IMR-90 (cell line): ENCODE measurements at regions of chr14 and their contacts with region 1.

Region 1: DNA sequence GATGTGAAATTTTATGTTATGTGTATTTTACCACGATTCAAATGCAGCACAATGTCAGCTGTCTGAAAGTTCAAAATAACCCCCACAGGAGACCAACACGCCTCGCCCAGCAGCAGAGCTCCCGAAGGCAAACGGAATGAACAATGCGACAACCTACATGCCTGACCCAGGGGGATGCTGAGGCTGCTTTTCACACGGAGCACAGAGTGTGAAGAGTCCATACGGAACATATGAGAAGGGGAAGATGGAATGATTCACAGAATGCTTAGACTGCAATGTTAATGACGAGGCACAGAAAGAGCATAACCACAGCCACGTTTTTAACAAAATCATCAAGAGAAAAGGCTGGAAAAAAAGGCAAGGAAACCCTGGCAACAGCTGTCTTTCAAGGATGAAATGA is 22.6 kb downstream of the ZFYVE21 start:
- DNase-seq: no peak
- ATAC-seq: no peak
- H3K4me3 ChIP-seq: no peak overlapping the region
- H3K27ac ChIP-seq: no peak overlapping the region
- H3K4me1 ChIP-seq: peaks cover 2% of the 10 kb centered on the region; the same call in 1 of the 2 replicates
- H3K27me3 ChIP-seq: no peaks in the 10 kb centered on the region
- CTCF ChIP-seq: no peak
- POLR2A ChIP-seq: no peak
- RAD21 ChIP-seq: no peak

Region 2: GRCh38 chr14:103770902-103771301 is 32.7 kb after region 1 on chr14:
- CTCF ChIA-PET with region 1: no interaction called
- POLR2A ChIA-PET with region 1: interaction called, 14 read pairs
- dilution Hi-C with region 1: no loop called
- in situ Hi-C with region 1: no loop called
- intact Hi-C with region 1: no loop called
- DNase-seq: no peak
- ATAC-seq: no peak
- H3K4me3 ChIP-seq: no peak overlapping the region
- H3K27ac ChIP-seq: no peak overlapping the region
- H3K4me1 ChIP-seq: no peaks in the 10 kb centered on the region
- H3K27me3 ChIP-seq: no peaks in the 10 kb centered on the region
- CTCF ChIP-seq: no peak
- POLR2A ChIP-seq: no peak
- RAD21 ChIP-seq: no peak